Panc1 (cell line): ENCODE measurements at regions of chr14 and their contacts with region 1.

Region 1: GRCh38 chr14:49946320-49947141 is 53.6 kb downstream of the ARF6 start:
- DNase-seq: peak; percentile 52
- ATAC-seq: peak; percentile 86
- H3K4me3 ChIP-seq: no peak overlapping the region; a peak in 1 of 4 replicates
- H3K27ac ChIP-seq: peak overlapping the region; percentile 98
- H3K4me1 ChIP-seq: peaks cover 49% of the 10 kb centered on the region
- H3K27me3 ChIP-seq: no peaks in the 10 kb centered on the region
- CTCF ChIP-seq: no peak

Region 2: DNA sequence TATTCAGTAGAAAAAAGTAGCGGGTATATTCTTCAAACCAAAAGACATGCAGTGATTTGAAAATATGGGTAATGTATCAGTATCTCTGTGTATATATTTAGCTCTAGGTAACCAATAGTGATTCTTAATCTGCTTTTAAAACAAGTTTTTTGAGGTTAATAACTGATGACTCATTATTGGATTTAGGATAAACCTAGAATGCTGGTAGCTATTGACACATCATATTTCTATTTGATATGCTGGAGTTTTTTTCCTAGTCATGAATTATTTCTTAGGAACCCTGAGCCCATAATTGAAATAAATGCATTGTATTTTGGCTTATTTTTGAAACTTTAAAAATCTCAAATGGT is 38.1 kb before region 1 on chr14:
- CTCF ChIA-PET with region 1: no interaction called
- POLR2A ChIA-PET with region 1: interaction called, 12 read pairs
- in situ Hi-C with region 1: no loop called
- intact Hi-C with region 1: no loop called
- DNase-seq: no peak
- ATAC-seq: no peak
- H3K4me3 ChIP-seq: no peak overlapping the region
- H3K27ac ChIP-seq: peak overlapping the region; percentile 90
- H3K4me1 ChIP-seq: peaks cover 33% of the 10 kb centered on the region
- H3K27me3 ChIP-seq: no peaks in the 10 kb centered on the region
- CTCF ChIP-seq: no peak